ENCODE measurements at regions of chr7 and their contacts with region 1.

Region 1: DNA sequence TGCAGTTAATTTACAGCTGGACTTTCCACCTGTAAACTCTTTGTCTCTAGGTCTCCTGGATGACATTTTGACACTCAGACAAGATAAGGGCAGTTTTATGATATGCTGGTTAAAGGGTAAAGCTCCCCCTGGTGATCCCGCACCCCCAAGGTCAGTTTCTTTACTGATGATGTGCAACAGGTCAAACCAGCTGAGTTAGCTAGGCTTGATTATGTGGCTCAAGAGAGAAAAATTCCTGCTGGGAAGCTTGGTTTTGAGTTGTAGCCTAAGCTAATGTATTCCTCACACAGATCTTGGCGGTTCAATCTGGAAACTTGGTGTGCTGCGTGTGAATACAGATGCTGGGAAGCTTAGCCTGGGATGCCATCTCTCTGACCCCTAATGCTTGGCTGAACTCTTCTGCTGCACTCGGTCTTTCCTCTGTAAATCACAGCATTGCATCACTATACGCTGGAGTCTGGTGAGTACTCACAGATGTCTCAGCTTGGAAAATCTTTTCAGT is 11.4 kb upstream of the AKR1D1 start:
- DNase-seq: peak; percentile 71 to 81
- H3K4me3 ChIP-seq: peak overlapping the region; percentile 17
- H3K4me3 Mint-ChIP-seq: peak overlapping the region; percentile 34
- H3K27ac Mint-ChIP-seq: no peak overlapping the region
- H3K4me1 ChIP-seq: peaks cover 51% of the 10 kb centered on the region
- H3K4me1 Mint-ChIP-seq: peaks cover 34% of the 10 kb centered on the region
- H3K27me3 ChIP-seq: no peaks in the 10 kb centered on the region
- H3K27me3 Mint-ChIP-seq: no peaks in the 10 kb centered on the region
- CTCF ChIP-seq: peak in 1 of 2 experiments; percentile 37

Region 2: DNA sequence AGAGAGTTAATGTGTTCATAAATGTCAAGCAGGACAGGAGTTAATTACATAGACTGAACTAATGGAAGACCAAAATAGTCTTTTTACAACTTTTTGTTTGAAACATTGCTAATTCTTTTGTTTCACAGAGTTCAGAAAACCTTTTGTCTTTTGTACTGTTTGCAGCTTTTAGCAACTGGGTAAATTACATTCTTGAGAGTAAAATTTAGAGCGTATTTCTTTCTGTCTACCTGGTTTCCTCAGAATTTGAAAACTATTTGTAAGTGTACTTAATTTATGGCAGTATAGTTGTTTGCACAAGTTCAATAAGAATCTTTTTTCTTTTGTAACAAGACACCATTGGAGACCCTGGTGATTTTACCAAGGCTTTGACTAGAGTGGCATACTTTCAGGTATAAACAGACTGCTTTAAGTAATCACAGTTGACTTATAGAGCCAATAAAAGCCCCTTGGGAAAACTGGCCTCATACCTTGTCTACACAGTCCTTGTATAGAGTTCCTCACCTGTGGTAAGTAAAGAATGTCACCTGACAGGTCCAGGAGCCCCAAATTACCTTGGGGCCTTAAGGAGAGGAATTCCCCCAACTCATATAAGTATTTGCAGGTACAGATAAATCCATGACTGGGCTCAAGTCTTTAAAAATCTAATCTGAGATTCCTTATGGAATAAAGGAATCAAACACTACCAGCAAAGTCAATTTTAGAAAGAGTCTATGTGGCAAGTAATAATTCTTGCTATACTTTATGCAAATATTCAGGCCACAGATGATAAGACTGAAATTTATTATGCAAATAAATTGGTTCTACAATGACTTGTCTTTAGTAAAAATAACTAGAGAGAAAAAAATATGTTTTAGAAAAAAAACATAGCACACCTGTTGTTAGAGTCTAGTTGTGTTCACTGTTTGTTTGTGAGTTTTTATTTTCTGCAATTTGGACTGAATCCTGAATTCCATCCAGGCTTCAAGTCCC is 39.4 kb before region 1 on chr7:
- CTCF ChIA-PET with region 1: no interaction called
- POLR2A ChIA-PET with region 1: interaction called, 3 read pairs
- intact Hi-C with region 1: loop called (anchors 1 kb)
- DNase-seq: peak; percentile 68 to 80
- H3K4me3 ChIP-seq: no peak overlapping the region
- H3K4me3 Mint-ChIP-seq: peak overlapping the region; percentile 43
- H3K27ac Mint-ChIP-seq: peak overlapping the region; percentile 90
- H3K4me1 ChIP-seq: peaks cover 48% of the 10 kb centered on the region
- H3K4me1 Mint-ChIP-seq: peaks cover 36% of the 10 kb centered on the region
- H3K27me3 ChIP-seq: no peaks in the 10 kb centered on the region
- H3K27me3 Mint-ChIP-seq: no peaks in the 10 kb centered on the region
- CTCF ChIP-seq: no peak

Measured in Caco-2 (cell line).